Cardiac septum (tissue), 1 donor: ENCODE measurements at regions of chr6 and their contacts with region 1.

Region 1: DNA sequence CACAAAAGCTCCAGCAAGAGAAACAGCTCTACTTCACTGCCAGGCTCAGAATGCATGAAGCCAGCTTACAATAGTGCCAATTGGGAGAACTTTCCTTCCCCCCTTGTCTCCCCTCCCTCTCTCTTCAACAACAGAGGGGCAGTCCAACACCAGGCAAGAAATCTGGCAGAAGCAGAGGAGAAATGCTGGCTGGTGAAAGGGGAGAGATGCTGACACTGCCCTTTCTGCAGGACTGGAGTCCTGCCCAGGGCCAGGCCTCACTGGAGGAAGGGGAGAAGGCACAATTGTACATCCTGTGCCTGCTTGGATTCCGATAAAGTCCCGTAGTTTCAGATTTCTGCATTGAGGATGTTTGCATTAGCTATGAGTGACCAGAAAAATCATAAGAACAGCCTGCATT is 148.6 kb downstream of the LRRC1 start:
- DNase-seq: no peak

Region 2: GRCh38 chr6:53786832-53787231 is 156.6 kb before region 1 on chr6:
- intact Hi-C with region 1: no loop called
- DNase-seq: no peak

Region 3: DNA sequence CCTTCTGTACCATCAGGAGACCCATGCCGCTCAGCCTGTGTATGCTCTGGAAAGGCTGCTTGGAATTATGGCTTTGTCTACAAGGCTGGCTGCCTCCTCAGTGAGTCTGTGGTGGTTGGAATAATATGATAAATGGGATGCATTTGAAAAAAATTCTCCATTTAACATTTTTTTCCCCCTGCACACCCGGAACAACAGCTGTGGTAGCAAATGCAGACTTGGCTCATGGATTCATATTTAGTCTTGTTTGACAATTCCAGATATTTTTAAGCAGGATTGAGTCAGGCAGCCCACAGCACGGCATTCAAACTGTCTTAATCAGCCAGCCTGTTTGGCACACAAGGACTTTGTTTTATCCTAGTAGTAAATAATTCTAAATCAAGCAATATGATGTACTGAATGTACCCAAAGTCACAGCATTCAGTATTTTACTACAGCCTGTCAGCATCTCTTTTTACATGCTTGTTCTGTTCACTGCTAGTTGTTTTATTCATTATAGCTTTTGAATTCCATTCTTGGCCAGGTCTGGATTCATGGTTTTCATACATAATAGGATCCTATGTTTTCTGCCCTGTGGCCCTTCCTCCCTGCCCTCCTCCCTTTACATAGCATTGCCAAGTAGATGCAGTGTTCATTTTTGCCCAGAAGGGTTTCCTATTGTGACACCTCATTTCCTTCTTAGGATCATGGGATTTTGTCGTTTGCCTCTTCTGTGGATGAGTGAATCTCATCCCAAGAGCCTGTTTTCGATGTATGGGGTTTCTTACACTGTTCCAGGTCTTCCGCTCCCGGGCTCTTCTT is 80.5 kb before region 1 on chr6:
- intact Hi-C with region 1: loop called (anchors 10 kb)
- DNase-seq: no peak

Region 4: DNA sequence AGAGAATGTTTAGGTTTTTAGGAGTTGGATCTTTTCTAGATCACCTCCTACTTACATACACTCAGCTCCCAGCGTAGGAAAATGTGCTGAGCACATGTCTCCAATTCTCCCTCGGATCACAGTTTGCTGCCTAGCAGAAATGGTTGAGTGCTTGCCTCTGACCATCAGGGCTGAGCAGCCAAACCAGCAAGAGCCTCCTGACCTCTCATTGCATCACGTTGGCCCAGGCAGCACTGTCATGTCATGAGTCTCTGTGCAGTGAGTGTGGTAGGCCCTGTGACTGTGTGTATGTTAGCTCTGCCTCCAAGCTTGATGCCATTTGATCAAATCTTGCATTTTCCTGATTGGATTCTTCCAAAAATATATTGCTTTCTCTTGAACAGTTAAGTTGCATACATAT is 36.6 kb before region 1 on chr6:
- intact Hi-C with region 1: no loop called
- DNase-seq: no peak

Region 5: GRCh38 chr6:53975936-53976615 is 32.7 kb after region 1 on chr6:
- intact Hi-C with region 1: no loop called
- DNase-seq: no peak

Region 6: DNA sequence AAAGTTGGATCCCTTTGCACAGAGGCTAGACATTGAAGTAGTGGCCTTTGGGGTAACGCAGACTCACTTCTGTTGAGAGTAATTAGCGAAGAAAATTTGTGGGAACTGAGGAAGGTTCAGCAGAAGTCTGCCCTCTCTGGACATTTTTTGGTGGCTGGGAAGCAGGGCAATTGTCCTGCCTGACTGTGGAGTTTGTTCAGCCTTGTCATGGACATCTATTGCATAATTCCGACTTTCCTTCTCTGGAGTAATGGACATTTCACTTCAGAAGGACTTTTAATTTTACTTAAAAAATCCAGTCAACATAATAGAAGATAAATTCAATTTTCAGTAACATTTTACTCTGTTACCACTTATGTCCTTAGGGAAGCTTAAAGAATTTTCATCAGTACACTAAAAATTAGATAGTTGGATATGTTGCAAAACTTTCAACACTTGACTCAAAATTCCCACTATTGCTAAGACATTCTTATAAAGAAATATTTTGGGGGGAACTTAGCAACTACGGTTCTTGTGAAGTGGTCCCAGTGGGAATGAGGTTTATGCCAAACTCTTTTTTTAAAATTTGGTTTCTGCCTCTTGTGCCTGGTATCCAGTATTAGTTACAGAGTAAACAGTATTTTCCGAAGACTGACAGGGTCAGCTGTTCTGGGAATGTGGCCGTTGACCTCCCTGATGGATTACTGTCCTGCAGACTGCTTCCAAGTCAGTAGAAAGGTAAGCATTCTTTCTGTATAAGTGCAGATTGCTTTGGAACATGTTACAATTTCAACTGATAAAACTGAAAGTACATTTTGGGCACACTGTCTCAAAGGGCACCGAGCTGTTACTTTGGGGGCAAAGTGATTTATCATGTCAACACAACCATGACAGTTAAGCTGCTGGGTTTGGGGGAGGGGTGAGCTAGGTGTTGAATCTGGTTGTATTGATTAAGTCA is 67.2 kb after region 1 on chr6:
- intact Hi-C with region 1: no loop called
- DNase-seq: no peak